GM10248 (cell line): ENCODE measurements at regions of chr2 and their contacts with region 1.

Region 1: GRCh38 chr2:225020168-225020849 is 22.0 kb downstream of the DOCK10 start:
- DNase-seq: no peak
- CTCF ChIP-seq: no peak

Region 2: DNA sequence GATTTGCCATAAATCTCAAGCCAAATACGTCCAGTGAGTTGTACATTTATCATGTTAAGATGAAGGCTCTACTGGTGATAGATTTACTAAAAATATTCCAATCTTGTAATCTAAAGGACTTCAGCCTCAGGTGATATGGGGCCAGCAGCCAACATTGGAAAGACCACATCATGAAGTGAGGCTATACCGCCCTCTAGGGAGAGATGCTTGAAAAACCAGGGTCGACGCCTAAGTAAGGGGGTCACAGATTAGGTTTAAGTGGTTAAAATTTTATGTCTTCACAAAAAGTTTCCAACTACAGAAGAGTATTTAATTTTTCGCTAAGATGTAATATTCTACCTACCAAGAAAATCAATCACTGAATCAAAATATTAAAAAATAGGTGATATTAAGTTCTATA is 11.4 kb before region 1 on chr2:
- CTCF ChIA-PET with region 1: interaction called, 19 read pairs
- POLR2A ChIA-PET with region 1: no interaction called
- DNase-seq: no peak
- CTCF ChIP-seq: peak; percentile 18